H1 (cell line): ENCODE measurements at regions of chr16 and their contacts with region 1.

Region 1: DNA sequence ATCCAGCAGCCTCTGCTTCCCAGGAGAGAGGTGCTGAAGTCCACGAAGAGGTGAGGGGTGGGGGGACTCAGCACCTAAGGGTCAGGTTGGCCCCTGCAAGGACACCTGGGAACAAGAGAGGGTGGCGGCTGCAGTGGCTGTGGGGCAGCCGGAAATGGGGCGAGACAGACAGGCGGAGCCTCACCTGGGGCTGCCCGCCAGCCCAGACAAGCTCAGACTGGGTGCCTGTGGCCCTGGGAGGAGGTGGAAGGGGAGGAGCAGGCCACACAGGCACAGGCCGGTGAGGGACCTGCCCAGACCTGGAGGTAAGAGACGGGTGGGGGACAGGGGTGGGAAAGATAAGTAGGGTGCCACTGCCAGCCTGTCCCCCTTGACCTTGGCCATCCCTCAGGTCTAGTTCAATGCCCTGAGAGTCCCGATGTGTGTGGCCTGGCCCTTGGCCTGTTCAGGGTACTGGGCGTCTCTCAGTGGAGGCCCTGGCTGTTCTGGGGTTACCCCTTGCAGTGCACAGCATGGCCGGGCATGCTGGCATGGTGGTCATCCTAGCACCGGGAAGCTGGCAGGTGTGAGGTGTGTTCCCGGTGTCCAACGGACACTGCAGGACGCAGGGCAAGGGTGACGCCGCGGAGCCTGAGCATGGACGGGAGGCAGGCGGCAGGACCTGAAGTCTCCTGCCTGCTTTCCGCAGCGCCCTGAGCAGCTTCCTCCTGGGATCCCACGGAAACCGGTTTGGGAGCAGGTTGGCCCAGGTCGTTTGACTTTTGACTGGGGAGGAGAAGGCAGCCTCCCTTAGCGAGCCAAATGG is 8.4 kb upstream of the ADGRG1 start:
- DNase-seq: peak in 1 of 2 experiments; percentile 44
- H3K4me3 ChIP-seq: no peak overlapping the region
- H3K27ac ChIP-seq: no peak overlapping the region
- H3K4me1 ChIP-seq: peaks cover 0 to 29% (median 15%) of the 10 kb centered on the region in 4 experiments; a peak in 6 of 7 replicates
- H3K27me3 ChIP-seq: no peaks in the 10 kb centered on the region
- CTCF ChIP-seq: no peak
- EP300 ChIP-seq: no peak
- POLR2A ChIP-seq: no peak
- RAD21 ChIP-seq: no peak

Region 2: DNA sequence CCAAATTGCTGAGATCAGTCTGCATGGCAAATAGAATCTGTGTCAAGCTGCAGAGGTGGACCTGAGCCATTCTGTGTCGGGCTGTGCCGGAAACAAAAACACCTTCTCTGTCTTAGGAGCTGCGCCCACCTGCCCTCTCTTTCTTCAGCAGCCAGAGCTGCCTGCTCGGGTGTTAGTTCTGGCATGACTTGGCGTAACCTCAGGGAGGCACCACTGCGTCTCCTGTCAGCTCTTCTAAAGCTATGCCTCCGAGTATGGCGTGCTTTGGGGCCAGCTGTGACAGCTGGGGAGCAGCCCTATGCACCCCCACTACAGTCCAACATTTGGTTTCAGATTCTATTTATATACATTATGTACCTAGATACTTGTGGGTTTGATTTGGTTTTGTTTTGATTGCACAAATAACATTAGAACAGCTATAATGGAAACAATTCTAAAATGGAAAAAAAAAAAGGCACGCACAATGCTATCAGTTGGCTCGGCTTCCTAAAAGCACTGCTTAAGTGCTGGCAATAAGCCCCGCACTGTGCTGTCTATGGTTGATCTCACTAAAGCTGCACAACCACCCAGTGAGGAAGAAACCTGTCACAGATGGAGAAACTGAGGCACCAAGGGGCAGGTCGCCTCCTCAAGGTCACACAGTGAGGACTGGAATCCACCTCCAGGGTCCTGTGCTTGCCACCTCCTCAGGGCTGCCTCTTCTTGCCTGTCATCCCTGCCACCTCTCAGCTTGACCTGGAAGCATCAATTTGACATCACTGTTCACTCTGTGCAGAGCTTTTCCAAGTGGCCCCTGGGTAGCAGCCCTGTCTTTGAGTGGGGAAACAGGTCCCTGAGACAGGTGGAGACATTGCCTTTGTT is 10.3 kb before region 1 on chr16:
- CTCF ChIA-PET with region 1: interaction called, 15 read pairs
- POLR2A ChIA-PET with region 1: interaction called, 6 read pairs
- DNase-seq: peak in 1 of 2 experiments; percentile 41
- H3K4me3 ChIP-seq: no peak overlapping the region
- H3K27ac ChIP-seq: no peak overlapping the region
- H3K4me1 ChIP-seq: no peaks in the 10 kb centered on the region
- H3K27me3 ChIP-seq: 0 out of 7 replicates have a peak, but pooled peaks cover 0 to 2% (median 0%) of the 10 kb centered on the region in 4 experiments
- CTCF ChIP-seq: peak; percentile 19 to 33 (median 29)
- EP300 ChIP-seq: no peak
- POLR2A ChIP-seq: no peak
- RAD21 ChIP-seq: peak; percentile 33 to 49; a peak in 3 of 4 replicates

Region 3: DNA sequence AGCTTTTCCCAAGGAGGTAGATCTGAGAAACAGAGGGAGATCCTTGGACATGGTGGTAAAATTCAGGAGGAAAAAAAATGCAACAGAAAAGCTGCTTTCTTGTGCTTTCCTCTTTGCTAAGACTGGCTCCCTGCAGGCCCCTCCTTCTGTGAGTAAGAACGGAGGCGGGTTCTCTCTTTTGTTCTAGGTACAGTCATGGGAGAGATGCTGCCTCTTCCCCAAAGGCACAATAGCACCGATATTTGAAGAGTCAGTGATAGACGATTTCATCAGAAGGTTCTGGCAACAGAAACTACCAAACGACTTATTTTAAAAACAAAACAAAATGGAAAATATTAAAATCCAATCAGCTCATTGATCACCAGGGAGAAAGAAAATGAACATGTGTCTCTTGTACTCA is 214.9 kb after region 1 on chr16:
- CTCF ChIA-PET with region 1: no interaction called
- POLR2A ChIA-PET with region 1: no interaction called
- DNase-seq: no peak
- H3K4me3 ChIP-seq: no peak overlapping the region
- H3K27ac ChIP-seq: no peak overlapping the region
- H3K4me1 ChIP-seq: peaks cover 6 to 12% (median 9%) of the 10 kb centered on the region in 4 experiments
- H3K27me3 ChIP-seq: no peaks in the 10 kb centered on the region
- CTCF ChIP-seq: no peak
- EP300 ChIP-seq: no peak
- POLR2A ChIP-seq: no peak
- RAD21 ChIP-seq: no peak